CD8-positive, alpha-beta T cell (primary cell): ENCODE measurements at regions of chr5 and their contacts with region 1.

Region 1: GRCh38 chr5:91641730-91642350 is 258.7 kb upstream of the ARRDC3 start:
- DNase-seq: peak in 2 of 9 experiments; percentile 33 to 45
- ATAC-seq: no peak
- H3K4me3 ChIP-seq: no peak overlapping the region
- H3K4me3 Mint-ChIP-seq: no peak overlapping the region
- H3K27ac ChIP-seq: no peak overlapping the region
- H3K27ac Mint-ChIP-seq: no peak overlapping the region
- H3K4me1 ChIP-seq: no peaks in the 10 kb centered on the region
- H3K4me1 Mint-ChIP-seq: no peaks in the 10 kb centered on the region
- H3K27me3 ChIP-seq: no peaks in the 10 kb centered on the region
- H3K27me3 Mint-ChIP-seq: no peaks in the 10 kb centered on the region
- CTCF ChIP-seq: peak; percentile 62

Region 2: DNA sequence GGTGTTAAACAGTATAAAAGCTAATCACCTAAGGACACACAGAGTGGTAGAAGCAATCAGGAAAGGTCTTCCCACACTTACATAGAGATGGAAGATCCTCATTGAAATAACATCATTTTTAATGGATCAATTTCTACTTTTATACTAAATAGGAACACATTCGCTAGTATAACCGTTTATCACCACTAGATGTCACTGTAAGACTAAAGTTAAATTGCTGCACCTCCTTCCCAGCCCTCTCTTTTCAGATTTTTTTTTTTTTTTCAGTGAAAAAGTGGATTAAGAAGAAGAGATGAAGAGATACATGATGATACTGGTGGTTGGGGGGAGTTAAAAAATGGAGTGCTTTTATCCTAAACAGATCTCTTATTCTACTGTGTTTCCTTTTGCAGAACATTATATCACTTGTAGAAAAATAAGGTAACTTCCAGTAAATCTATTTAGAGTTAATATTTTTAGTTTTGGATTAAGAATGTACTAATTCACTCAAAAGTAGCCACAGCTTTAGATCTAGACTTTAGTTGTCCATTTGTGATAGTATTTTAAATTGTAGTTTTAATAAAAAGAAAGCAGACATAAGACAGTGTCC is 141.8 kb before region 1 on chr5:
- CTCF ChIA-PET with region 1: interaction called, 10 read pairs
- POLR2A ChIA-PET with region 1: no interaction called
- intact Hi-C with region 1: loop called in 1 of 2 experiments (anchors 5 kb)
- DNase-seq: peak in 2 of 9 experiments; percentile 56 to 66
- ATAC-seq: no peak
- H3K4me3 ChIP-seq: no peak overlapping the region
- H3K4me3 Mint-ChIP-seq: no peak overlapping the region
- H3K27ac ChIP-seq: no peak overlapping the region
- H3K27ac Mint-ChIP-seq: no peak overlapping the region
- H3K4me1 ChIP-seq: no peaks in the 10 kb centered on the region
- H3K4me1 Mint-ChIP-seq: no peaks in the 10 kb centered on the region
- H3K27me3 ChIP-seq: no peaks in the 10 kb centered on the region
- H3K27me3 Mint-ChIP-seq: no peaks in the 10 kb centered on the region
- CTCF ChIP-seq: peak; percentile 80